ENCODE measurements at regions of chr13 and their contacts with region 1.

Region 1: GRCh38 chr13:21326155-21327031 is 132.7 kb downstream of the ZDHHC20 start:
- DNase-seq: peak; percentile 34
- H3K4me3 Mint-ChIP-seq: peak overlapping the region; percentile 31
- H3K27ac Mint-ChIP-seq: no peak overlapping the region
- H3K4me1 Mint-ChIP-seq: peaks cover 22% of the 10 kb centered on the region
- H3K27me3 Mint-ChIP-seq: no peaks in the 10 kb centered on the region

Region 2: GRCh38 chr13:19952850-19953249 is 1373.5 kb before region 1 on chr13:
- CTCF ChIA-PET with region 1: no interaction called
- intact Hi-C with region 1: no loop called
- DNase-seq: no peak
- H3K4me3 Mint-ChIP-seq: no peak overlapping the region
- H3K27ac Mint-ChIP-seq: no peak overlapping the region
- H3K4me1 Mint-ChIP-seq: peaks cover 3% of the 10 kb centered on the region
- H3K27me3 Mint-ChIP-seq: no peaks in the 10 kb centered on the region

Region 3: DNA sequence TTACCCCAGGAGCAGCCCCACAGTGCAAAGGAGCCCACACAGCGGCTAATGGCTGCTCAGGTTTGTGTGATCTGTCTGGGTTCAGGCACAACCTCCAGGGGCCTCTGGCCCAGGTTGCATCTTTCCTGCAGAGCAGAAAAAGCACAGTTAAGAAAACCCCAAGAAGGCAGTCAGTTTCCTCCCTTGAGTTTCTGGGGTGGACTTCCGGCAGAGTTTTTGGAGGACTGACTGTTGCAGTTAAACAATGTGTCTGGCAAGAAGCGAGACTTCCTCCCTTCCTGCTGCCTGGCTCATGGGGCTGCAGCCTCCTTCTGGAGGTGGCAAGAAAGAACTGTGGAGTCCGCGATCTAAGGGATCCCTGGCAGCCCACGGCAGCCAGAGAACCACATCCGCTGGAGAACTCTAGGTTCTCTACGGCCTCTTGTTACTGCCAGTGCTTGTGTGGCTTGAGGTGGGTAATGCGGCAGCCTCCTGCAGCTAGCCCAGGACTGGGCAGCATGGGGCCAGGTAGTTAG is 18.3 kb after region 1 on chr13:
- CTCF ChIA-PET with region 1: interaction called, 4 read pairs
- intact Hi-C with region 1: loop called (anchors 2 kb)
- DNase-seq: peak; percentile 48
- H3K4me3 Mint-ChIP-seq: peak overlapping the region; percentile 36
- H3K27ac Mint-ChIP-seq: peak overlapping the region; percentile 78
- H3K4me1 Mint-ChIP-seq: peaks cover 25% of the 10 kb centered on the region
- H3K27me3 Mint-ChIP-seq: no peaks in the 10 kb centered on the region